ENCODE measurements at regions of chr1 and their contacts with region 1.

Region 1: DNA sequence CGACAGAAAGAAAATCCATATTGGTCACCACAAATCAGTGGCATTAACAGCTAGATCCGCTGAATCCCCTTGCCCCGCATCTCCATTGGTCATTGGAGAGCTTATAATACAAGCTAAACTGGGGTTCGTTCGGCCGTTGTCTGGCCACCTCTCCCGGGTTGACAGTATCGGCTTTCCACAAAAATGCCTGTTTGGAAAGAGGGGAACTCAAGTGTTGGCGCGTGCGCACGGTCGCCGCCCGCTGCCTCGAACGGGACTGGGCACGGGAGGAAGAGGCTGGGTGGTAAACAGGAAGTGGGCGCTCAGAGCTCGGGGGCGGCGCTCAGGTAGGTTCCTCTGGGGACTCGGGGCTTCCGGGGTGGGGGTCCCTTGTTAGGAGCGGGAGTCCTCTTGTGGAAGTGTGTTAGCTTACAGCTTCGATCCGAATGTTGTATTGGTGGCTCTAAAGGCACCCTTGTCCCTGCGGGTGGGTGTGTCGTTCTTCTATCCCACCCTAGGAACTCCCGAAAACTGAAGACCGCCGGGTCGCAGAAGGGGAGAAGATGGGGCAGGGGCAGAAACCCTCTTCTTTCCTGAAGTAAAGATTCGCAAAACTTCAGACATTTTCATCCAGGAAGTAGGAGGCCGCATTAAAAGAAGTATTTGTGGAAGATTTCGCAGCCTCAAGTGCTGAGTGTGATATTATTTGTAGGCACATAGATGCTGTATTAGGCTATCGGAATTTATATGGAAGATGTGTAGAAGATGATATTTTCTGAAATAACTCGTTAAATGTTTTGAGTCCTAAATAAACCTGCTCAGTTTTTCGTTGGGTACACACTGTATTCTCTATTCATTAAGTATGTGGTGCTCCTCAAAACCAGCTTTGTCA is 962 bp downstream of the BROX start:
- DNase-seq: peak; percentile 96
- H3K4me3 ChIP-seq: peak overlapping the region; percentile 63
- H3K27ac ChIP-seq: peak overlapping the region; percentile 98
- H3K4me1 ChIP-seq: no peaks in the 10 kb centered on the region
- H3K27me3 ChIP-seq: no peaks in the 10 kb centered on the region
- CTCF ChIP-seq: no peak

Region 2: GRCh38 chr1:222570837-222571236 is 142.5 kb before region 1 on chr1:
- intact Hi-C with region 1: no loop called
- DNase-seq: no peak
- H3K4me3 ChIP-seq: no peak overlapping the region
- H3K27ac ChIP-seq: no peak overlapping the region
- H3K4me1 ChIP-seq: no peaks in the 10 kb centered on the region
- H3K27me3 ChIP-seq: no peaks in the 10 kb centered on the region
- CTCF ChIP-seq: no peak

Region 3: DNA sequence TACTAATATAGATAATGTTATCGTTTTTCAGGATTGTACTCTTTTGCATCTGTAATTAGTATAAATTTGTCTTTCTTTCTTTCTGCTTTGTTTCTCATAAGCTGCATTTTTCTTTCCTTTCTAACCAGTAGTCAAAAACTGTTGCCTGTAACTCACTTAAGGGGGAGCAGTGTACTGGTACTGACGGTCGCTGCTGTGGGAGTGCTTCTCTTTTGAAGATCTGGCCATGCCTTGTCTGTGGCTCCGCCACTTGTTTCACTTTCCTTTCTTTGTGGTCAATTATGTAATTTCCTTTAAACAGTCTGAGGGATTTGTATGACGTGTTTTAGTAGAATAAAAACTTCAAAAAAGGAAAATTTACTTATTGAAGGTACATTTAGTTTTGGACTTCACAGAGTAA is 58.5 kb before region 1 on chr1:
- intact Hi-C with region 1: loop called (anchors 5 kb)
- DNase-seq: peak; percentile 29
- H3K4me3 ChIP-seq: no peak overlapping the region
- H3K27ac ChIP-seq: no peak overlapping the region
- H3K4me1 ChIP-seq: no peaks in the 10 kb centered on the region
- H3K27me3 ChIP-seq: no peaks in the 10 kb centered on the region
- CTCF ChIP-seq: no peak